K562 (cell line): ENCODE measurements at regions of chr9 and their contacts with region 1.

Region 1: GRCh38 chr9:127734747-127735529 is at the start of gene TOR2A:
- DNase-seq: peak; percentile 95 to 98 (median 97)
- ATAC-seq: peak; percentile 98
- H3K4me3 ChIP-seq: peak within 1 kb of the TSS; percentile 74
- H3K27ac ChIP-seq: peak within 1 kb of the TSS; percentile 87
- H3K4me1 ChIP-seq: peaks cover 7 to 43% of the 10 kb centered on the region in 2 experiments; a peak in 4 of 5 replicates
- H3K27me3 ChIP-seq: no peaks in the 10 kb centered on the region
- CTCF ChIP-seq: peak; percentile 96 to 98 (median 98)
- EP300 ChIP-seq: no peak
- POLR2A ChIP-seq: peak; percentile 79
- RAD21 ChIP-seq: peak; percentile 98 to 99
- polyA plus RNA-seq, gene TOR2A: 0.80 to 1.1 TPM

Region 2: GRCh38 chr9:127634698-127635097 is 100.2 kb before region 1 on chr9:
- CTCF ChIA-PET with region 1: interaction called, 4 read pairs
- POLR2A ChIA-PET with region 1: no interaction called
- in situ Hi-C with region 1: no loop called
- intact Hi-C with region 1: loop called (anchors 2 kb)
- DNase-seq: peak in 1 of 4 experiments; percentile 65
- ATAC-seq: peak; percentile 74
- H3K4me3 ChIP-seq: no peak overlapping the region
- H3K27ac ChIP-seq: no peak overlapping the region
- H3K4me1 ChIP-seq: peaks cover 7 to 16% of the 10 kb centered on the region in 2 experiments; a peak in 4 of 5 replicates
- H3K27me3 ChIP-seq: no peaks in the 10 kb centered on the region
- CTCF ChIP-seq: peak; percentile 50 to 71 (median 69)
- EP300 ChIP-seq: no peak
- POLR2A ChIP-seq: no peak
- RAD21 ChIP-seq: peak in 1 of 2 experiments; percentile 47; a peak in 2 of 4 replicates

Region 3: DNA sequence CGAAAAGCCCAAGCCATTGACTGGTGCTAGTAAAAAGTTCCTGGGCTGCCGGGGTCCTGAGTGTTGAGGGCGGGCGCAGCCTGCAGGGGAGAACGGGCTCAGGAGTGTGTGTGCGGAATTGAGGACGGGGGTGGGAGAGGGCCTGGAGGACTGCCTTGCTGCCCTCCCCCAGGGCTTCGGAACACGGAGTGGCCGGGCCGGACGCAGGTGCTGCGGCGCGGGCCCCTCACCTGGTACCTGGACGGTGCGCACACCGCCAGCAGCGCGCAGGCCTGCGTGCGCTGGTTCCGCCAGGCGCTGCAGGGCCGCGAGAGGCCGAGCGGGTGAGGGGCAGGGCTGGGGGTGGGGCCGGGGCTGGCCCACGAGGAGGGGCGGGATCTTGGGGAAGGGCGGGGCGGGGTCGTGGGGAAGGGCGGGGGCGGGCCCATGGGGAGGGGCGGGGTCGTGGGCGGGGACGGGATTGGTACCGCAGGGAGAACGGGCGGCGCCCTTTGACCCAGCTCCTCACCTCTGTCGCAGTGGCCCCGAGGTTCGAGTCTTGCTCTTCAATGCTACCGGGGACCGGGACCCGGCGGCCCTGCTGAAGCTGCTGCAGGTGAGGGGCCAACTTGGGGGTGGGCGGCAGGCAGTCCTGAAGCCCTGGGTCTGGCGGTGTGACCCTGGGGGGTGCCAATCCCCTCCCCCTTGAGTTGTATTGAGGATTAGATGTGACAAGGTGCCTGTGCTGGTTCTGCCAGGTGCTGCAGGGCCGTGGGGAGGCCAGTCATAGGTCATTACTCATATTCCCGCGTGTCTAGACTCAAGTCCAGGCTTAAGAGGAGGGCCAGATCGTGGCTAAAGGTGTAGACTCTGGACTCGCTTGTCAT is 74.8 kb after region 1 on chr9:
- CTCF ChIA-PET with region 1: no interaction called
- POLR2A ChIA-PET with region 1: no interaction called
- in situ Hi-C with region 1: no loop called
- intact Hi-C with region 1: loop called (anchors 2 kb)
- DNase-seq: peak; percentile 79 to 96 (median 96)
- ATAC-seq: peak; percentile 95
- H3K4me3 ChIP-seq: no peak overlapping the region
- H3K27ac ChIP-seq: peak overlapping the region; percentile 3; the same call in 1 of the 3 replicates
- H3K4me1 ChIP-seq: peaks cover 12 to 37% of the 10 kb centered on the region in 2 experiments
- H3K27me3 ChIP-seq: no peaks in the 10 kb centered on the region
- CTCF ChIP-seq: no peak; a peak in 1 of 6 replicates
- EP300 ChIP-seq: no peak
- POLR2A ChIP-seq: no peak
- RAD21 ChIP-seq: no peak

Region 4: GRCh38 chr9:127916665-127917613 is 182.0 kb after region 1 on chr9 and contains the start of gene ST6GALNAC4:
- CTCF ChIA-PET with region 1: interaction called, 34 read pairs
- POLR2A ChIA-PET with region 1: interaction called, 3 read pairs
- in situ Hi-C with region 1: loop called (anchors 5 kb)
- intact Hi-C with region 1: loop called (anchors 1 kb)
- DNase-seq: peak; percentile 94 to 98 (median 97)
- ATAC-seq: peak; percentile 94
- H3K4me3 ChIP-seq: peak within 1 kb of the TSS; percentile 70
- H3K27ac ChIP-seq: peak within 1 kb of the TSS; percentile 40
- H3K4me1 ChIP-seq: peaks cover 38 to 62% of the 10 kb centered on the region in 2 experiments
- H3K27me3 ChIP-seq: no peaks in the 10 kb centered on the region
- CTCF ChIP-seq: no peak
- EP300 ChIP-seq: no peak
- POLR2A ChIP-seq: peak; percentile 67
- RAD21 ChIP-seq: no peak
- polyA plus RNA-seq, gene ST6GALNAC4: 2.6 to 3.4 TPM